ENCODE measurements at regions of chr15 and their contacts with region 1.

Region 1: DNA sequence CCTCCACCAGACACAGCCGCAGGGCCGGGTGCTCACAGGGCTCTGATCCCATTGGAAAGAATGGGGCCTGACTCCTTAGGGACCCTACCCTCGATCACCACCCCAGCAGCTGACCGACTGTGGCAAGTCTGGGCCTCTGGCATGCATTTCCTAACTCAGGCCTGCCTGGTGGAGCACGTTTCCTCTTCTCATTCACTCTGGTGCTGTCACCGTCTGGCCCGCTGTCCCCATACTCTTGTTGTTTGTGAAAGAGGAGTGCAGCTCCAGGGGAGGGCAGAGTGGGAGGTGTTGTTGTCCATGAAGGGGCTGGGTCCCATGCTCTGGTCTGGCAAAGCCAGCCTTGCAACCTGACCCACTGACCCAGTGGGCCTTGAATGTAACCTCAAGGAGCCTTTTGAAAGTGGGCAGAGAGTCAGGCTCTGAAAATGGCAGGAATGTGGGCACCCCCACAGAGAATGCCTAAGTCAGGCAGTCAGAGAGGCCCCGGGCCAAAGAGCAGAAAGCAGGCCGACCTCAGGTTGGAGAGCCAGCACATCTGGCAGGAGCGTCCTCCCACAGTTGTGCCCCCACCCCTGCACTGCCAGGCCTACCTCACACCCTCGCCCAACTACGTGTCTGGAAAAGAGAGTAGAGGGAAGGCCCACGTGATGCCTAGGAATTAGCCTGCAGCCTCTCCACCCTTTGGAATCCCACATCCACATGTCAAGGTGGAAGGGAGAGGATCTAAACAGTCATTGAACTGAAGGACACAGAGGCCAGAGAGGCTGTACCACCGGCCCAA is 10.9 kb downstream of the SEMA7A start:
- DNase-seq: peak; percentile 93 to 96
- H3K4me3 ChIP-seq: no peak overlapping the region
- H3K27ac ChIP-seq: peak overlapping the region; percentile 80
- H3K4me1 ChIP-seq: peaks cover 65% of the 10 kb centered on the region
- H3K27me3 ChIP-seq: no peaks in the 10 kb centered on the region
- CTCF ChIP-seq: no peak

Region 2: GRCh38 chr15:74245342-74245931 is 177.4 kb before region 1 on chr15:
- CTCF ChIA-PET with region 1: no interaction called
- POLR2A ChIA-PET with region 1: no interaction called
- intact Hi-C with region 1: no loop called
- DNase-seq: no peak
- H3K4me3 ChIP-seq: no peak overlapping the region
- H3K27ac ChIP-seq: no peak overlapping the region
- H3K4me1 ChIP-seq: peaks cover 28% of the 10 kb centered on the region
- H3K27me3 ChIP-seq: no peaks in the 10 kb centered on the region
- CTCF ChIP-seq: no peak

Region 3: DNA sequence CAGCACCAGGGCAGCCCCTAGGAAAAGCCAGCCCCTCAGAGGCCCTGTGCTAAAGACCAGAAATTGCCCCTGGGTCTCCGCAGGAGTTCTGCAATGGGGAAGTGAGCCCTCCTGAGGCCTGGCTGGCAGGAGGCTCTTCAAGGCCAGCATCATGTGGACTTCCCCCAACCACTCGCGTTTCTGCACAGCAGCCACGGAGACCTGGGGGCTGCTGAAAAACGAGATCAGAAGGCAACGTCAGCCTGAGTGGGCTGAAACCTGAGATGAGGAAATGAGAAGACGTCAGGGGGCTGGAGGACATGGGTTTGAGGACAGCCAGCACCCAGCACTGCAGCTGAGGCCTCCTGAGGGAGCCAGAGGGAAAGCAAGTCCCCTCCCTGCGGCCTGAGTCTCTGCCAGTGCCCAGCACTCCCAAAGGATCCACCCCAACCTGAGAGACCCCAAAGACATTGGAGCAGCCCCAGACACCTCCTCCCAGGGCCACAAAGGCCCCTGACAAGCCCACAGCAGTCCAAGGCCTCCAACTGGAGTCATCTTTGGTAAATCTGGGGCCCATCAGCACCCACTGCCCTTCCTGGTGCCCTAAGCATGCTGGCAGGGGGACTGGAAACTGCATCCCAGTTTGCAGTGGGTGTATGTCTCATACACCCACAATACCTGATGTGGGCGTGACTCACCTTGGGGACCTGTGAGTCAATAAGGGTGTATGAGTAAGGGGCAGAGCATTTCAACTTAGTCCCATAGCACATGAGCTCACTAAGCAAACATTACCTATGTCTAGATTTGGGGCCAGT is 26.2 kb before region 1 on chr15:
- CTCF ChIA-PET with region 1: interaction called, 4 read pairs
- POLR2A ChIA-PET with region 1: interaction called, 9 read pairs
- intact Hi-C with region 1: loop called (anchors 1 kb)
- DNase-seq: peak; percentile 84 to 95
- H3K4me3 ChIP-seq: no peak overlapping the region
- H3K27ac ChIP-seq: peak overlapping the region; percentile 98
- H3K4me1 ChIP-seq: peaks cover 72% of the 10 kb centered on the region
- H3K27me3 ChIP-seq: no peaks in the 10 kb centered on the region
- CTCF ChIP-seq: no peak

Region 4: DNA sequence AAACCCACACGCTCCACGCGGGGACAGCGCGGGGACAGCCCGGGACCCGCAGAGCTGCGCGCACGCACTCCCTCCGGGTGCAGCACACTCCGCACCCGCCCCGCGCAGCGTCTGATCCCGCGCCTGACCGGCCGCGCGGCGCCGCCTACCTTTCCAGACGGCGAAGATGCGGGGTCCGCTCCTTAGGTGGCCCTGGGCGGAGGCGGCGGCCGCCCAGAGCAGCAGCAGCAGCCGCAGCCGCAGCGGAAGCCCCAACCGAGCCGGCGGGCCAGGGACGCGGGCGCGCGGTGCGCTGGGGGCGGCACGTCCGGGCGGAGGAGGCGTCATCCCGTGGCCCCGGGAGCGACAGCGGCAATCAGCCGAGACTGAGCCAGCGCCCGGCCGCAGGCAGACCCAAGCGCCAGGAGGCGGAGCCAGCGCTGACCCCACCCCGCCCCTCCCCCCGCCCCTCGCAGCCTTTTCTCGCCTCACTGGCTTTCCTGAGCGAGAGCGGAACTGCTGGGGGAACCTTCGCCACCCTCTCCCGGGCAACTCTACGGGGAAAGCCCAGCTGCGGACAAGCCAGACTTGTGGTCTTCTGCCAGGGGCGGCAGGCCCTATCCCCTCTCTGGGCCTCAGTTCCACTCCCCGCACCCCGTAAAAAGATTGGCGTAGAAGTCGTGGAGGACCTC is 10.9 kb after region 1 on chr15 and contains the start of gene SEMA7A:
- CTCF ChIA-PET with region 1: no interaction called
- POLR2A ChIA-PET with region 1: no interaction called
- intact Hi-C with region 1: loop called (anchors 1 kb)
- DNase-seq: peak; percentile 39 to 80
- H3K4me3 ChIP-seq: peak within 1 kb of the TSS; percentile 69
- H3K27ac ChIP-seq: no peak within 1 kb of the TSS
- H3K4me1 ChIP-seq: peaks cover 6% of the 10 kb centered on the region; the same call in 1 of the 2 replicates
- H3K27me3 ChIP-seq: no peaks in the 10 kb centered on the region
- CTCF ChIP-seq: no peak
- total RNA-seq, gene SEMA7A: 8.3 and 14.5 TPM in 2 replicates

Region 5: DNA sequence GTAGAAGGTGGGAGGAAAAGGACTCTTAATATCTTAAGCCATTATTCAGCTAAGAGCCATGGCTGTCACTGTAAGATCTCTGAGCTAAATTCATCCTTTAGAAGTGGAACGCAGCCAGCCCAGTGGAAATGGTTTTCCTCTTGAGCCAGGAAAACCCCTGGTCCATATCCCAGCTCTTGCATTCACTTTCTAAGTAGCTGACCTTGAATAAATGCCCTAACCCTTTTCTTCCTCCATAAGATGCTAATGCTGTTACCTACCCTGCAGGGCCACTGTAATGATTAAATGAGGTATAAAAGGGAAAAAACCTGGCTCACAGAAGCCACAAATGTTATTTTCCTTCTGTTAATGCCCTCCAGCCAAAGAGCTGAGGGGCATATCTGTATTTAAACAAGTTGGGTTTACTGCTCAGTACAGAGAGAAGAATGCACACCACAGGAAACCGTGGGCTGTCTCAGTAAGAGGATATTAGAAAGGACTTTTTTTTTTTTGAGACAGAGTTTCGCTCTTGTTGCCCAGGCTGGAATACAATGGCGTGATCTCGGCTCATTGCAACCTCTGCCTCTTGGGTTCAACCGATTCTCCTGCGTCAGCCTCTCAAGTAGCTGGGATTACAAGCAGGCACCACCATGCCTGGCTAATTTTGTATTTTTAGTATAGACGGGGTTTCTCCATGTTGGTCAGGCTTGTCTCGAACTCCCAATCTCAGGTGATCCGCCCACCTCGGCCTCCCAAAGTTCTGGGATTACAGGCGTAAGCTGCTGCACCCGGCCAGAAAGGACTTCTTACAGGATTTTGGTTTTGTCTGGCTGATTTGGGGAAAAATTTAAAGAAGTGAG is 31.3 kb after region 1 on chr15:
- CTCF ChIA-PET with region 1: no interaction called
- POLR2A ChIA-PET with region 1: no interaction called
- intact Hi-C with region 1: no loop called
- DNase-seq: no peak
- H3K4me3 ChIP-seq: no peak overlapping the region
- H3K27ac ChIP-seq: no peak overlapping the region
- H3K4me1 ChIP-seq: no peaks in the 10 kb centered on the region
- H3K27me3 ChIP-seq: no peaks in the 10 kb centered on the region
- CTCF ChIP-seq: no peak

Region 6: GRCh38 chr15:74531144-74531811 is 108.4 kb after region 1 on chr15:
- CTCF ChIA-PET with region 1: no interaction called
- POLR2A ChIA-PET with region 1: interaction called, 4 read pairs
- intact Hi-C with region 1: loop called (anchors 1 kb)
- DNase-seq: peak; percentile 77 to 97
- H3K4me3 ChIP-seq: peak overlapping the region; percentile 32; the same call in 1 of the 2 replicates
- H3K27ac ChIP-seq: peak overlapping the region; percentile 90
- H3K4me1 ChIP-seq: peaks cover 36% of the 10 kb centered on the region
- H3K27me3 ChIP-seq: no peaks in the 10 kb centered on the region
- CTCF ChIP-seq: no peak

Region 7: GRCh38 chr15:74781431-74782258 is 358.8 kb after region 1 on chr15 and contains the start of gene CSK:
- CTCF ChIA-PET with region 1: no interaction called
- POLR2A ChIA-PET with region 1: no interaction called
- intact Hi-C with region 1: no loop called
- DNase-seq: peak in 1 of 2 experiments; percentile 77
- H3K4me3 ChIP-seq: peak within 1 kb of the TSS; percentile 95
- H3K27ac ChIP-seq: no peak within 1 kb of the TSS
- H3K4me1 ChIP-seq: peaks cover 20% of the 10 kb centered on the region
- H3K27me3 ChIP-seq: no peaks in the 10 kb centered on the region
- CTCF ChIP-seq: peak; percentile 65
- total RNA-seq, gene CSK: 78.3 TPM in 2 replicates

Region 8: DNA sequence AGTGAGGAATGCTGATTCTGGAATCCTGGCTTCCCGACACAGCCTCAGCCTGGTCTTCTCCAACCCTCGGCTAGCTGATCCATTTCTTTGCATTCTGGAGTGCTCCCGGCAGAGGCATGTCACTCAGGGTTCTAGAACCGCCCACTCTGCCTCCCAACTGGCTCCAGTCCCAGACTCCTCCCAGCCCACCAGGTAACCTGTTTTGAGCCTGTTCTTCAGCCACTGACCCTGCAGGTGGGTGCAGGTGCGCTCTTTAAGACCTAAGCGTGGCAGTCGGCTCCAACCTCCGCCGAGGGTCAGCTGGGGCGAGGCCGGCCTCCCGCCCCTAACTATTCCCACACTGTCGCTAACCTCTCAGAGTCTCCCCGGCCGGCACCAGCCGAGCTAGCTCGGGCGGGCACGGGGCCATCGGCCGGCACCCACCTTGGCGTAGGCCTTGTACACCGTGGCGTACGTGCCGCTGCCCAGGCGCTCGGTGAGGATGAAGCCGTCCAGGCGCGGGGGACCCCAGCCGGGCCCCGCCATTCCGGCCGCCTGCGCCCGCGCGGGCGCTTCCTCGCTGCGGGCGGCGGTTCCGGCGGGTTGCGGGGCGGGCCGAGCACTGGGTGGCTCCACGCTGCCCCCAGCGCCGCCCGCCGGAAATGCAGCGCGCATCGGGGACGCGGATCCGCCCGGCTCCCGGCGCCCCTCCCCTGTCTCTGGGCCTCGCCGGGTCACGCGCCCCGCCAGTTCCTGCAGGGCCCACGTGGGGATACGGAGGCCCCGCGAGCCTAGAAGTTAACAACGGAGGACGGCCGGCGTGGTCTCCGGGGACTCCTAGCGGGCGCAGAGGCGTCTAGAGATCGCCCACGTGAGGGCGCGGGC is 420.0 kb after region 1 on chr15 and contains the start of gene ULK3:
- CTCF ChIA-PET with region 1: no interaction called
- POLR2A ChIA-PET with region 1: interaction called, 20 read pairs
- intact Hi-C with region 1: no loop called
- DNase-seq: peak; percentile 78 to 87
- H3K4me3 ChIP-seq: peak within 1 kb of the TSS; percentile 91
- H3K27ac ChIP-seq: peak within 1 kb of the TSS; percentile 47
- H3K4me1 ChIP-seq: peaks cover 11% of the 10 kb centered on the region
- H3K27me3 ChIP-seq: no peaks in the 10 kb centered on the region
- CTCF ChIP-seq: peak; percentile 59
- total RNA-seq, gene ULK3: 30.2 and 46.6 TPM in 2 replicates

Region 9: DNA sequence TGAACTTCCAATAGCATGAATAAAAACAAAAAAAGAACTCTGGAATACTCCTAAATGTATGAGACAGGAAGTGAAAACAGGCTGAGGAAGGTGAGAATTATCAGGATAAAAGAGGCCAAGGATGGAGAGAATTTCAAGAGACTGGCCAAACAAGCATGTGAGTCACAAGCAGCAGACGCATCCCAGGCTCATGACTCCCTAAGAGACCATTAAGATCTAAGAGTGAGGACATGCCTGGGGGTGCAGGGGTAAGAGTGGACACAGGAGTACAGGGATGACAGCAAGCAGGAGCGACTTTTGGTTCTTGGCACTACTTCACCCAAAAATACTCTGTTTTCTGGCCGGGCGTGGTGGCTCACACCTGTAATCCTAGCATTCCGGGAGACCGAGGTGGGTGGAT is 443.2 kb after region 1 on chr15:
- CTCF ChIA-PET with region 1: no interaction called
- POLR2A ChIA-PET with region 1: interaction called, 12 read pairs
- intact Hi-C with region 1: no loop called
- DNase-seq: peak; percentile 46 to 71
- H3K4me3 ChIP-seq: no peak overlapping the region
- H3K27ac ChIP-seq: peak overlapping the region; percentile 49; the same call in 1 of the 2 replicates
- H3K4me1 ChIP-seq: peaks cover 67% of the 10 kb centered on the region
- H3K27me3 ChIP-seq: no peaks in the 10 kb centered on the region
- CTCF ChIP-seq: no peak

Measured in PC-9 (cell line).